Mammary epithelial cell (primary cell): ENCODE measurements at regions of chr1 and their contacts with region 1.

Region 1: GRCh38 chr1:246450611-246451251 is 56.3 kb downstream of the SMYD3 start:
- DNase-seq: peak; percentile 23
- H3K4me3 ChIP-seq: no peak overlapping the region
- H3K27ac ChIP-seq: no peak overlapping the region
- H3K4me1 ChIP-seq: peaks cover 3% of the 10 kb centered on the region
- H3K27me3 ChIP-seq: no peaks in the 10 kb centered on the region
- CTCF ChIP-seq: peak; percentile 62 to 74

Region 2: DNA sequence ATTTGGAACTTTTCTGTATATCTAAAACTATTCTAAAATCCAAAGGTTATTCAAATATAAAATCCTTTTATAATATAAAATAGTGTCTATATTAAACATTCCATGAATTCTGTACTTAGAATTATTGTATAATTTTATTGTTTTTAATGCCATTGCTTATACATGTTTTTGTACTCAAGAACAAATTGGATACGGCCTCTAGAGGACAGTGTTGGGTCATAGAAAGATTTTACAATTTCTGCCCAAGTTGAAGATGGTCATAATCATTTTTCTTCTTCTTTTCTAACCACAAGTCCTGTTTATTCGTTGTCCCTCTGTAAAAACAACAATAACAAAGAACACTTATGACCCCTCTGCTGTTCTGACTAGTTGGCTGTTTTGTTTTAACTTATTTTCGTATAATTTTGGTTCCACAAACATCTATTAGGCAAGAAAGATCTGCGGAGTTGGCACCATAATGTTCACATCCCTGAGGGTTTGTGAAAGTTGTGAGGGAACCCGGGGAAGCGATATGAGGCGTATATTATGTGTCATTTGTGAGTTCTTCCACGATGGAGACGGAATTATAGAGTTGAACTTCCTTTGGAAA is 1371.6 kb before region 1 on chr1:
- CTCF ChIA-PET with region 1: no interaction called
- dilution Hi-C with region 1: no loop called
- in situ Hi-C with region 1: no loop called
- intact Hi-C with region 1: loop called (anchors 2 kb)
- DNase-seq: peak; percentile 26
- H3K4me3 ChIP-seq: no peak overlapping the region
- H3K27ac ChIP-seq: no peak overlapping the region
- H3K4me1 ChIP-seq: no peaks in the 10 kb centered on the region
- H3K27me3 ChIP-seq: no peaks in the 10 kb centered on the region
- CTCF ChIP-seq: peak; percentile 81 to 90

Region 3: DNA sequence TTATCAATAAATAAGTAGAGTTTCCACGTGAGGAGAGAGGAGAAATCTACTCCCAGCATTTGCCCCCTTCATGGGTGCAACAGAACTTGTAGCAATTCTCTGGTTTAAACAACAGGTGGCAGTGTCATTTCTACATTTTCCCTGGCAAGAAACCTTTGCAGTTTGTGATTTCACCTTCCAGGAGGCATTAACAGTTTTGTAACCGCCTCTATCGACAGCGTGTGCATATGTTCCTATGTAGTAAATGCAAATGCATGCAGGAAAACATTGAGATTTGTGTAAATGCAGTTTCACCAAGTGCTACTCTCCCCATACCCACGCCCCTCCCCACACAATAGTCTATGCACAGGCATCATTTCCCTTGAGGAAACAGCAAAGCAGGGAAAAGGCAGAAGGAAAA is 438.4 kb before region 1 on chr1:
- CTCF ChIA-PET with region 1: no interaction called
- dilution Hi-C with region 1: no loop called
- in situ Hi-C with region 1: loop called (anchors 10 to 25 kb)
- intact Hi-C with region 1: loop called (anchors 1 kb)
- DNase-seq: peak; percentile 16
- H3K4me3 ChIP-seq: no peak overlapping the region
- H3K27ac ChIP-seq: no peak overlapping the region
- H3K4me1 ChIP-seq: peaks cover 6% of the 10 kb centered on the region
- H3K27me3 ChIP-seq: no peaks in the 10 kb centered on the region
- CTCF ChIP-seq: peak; percentile 44 to 71

Region 4: GRCh38 chr1:246139745-246140182 is 311.0 kb before region 1 on chr1:
- CTCF ChIA-PET with region 1: no interaction called
- dilution Hi-C with region 1: no loop called
- in situ Hi-C with region 1: no loop called
- intact Hi-C with region 1: loop called (anchors 10 kb)
- DNase-seq: peak; percentile 96
- H3K4me3 ChIP-seq: no peak overlapping the region
- H3K27ac ChIP-seq: peak overlapping the region; percentile 95
- H3K4me1 ChIP-seq: peaks cover 42% of the 10 kb centered on the region
- H3K27me3 ChIP-seq: no peaks in the 10 kb centered on the region
- CTCF ChIP-seq: no peak

Region 5: GRCh38 chr1:246246430-246246829 is 204.3 kb before region 1 on chr1:
- CTCF ChIA-PET with region 1: no interaction called
- dilution Hi-C with region 1: no loop called
- in situ Hi-C with region 1: no loop called
- intact Hi-C with region 1: loop called (anchors 1 kb)
- DNase-seq: no peak
- H3K4me3 ChIP-seq: no peak overlapping the region
- H3K27ac ChIP-seq: no peak overlapping the region
- H3K4me1 ChIP-seq: no peaks in the 10 kb centered on the region
- H3K27me3 ChIP-seq: no peaks in the 10 kb centered on the region
- CTCF ChIP-seq: no peak

Region 6: GRCh38 chr1:246280551-246280950 is 170.2 kb before region 1 on chr1:
- CTCF ChIA-PET with region 1: interaction called, 6 read pairs
- dilution Hi-C with region 1: no loop called
- in situ Hi-C with region 1: loop called in 1 of 2 experiments (anchors 25 kb)
- intact Hi-C with region 1: loop called (anchors 5 kb)
- DNase-seq: no peak
- H3K4me3 ChIP-seq: no peak overlapping the region
- H3K27ac ChIP-seq: no peak overlapping the region
- H3K4me1 ChIP-seq: no peaks in the 10 kb centered on the region
- H3K27me3 ChIP-seq: no peaks in the 10 kb centered on the region
- CTCF ChIP-seq: peak in 1 of 2 donors; percentile 40